ENCODE measurements at regions of chr13 and their contacts with region 1.

Region 1: GRCh38 chr13:95156208-95156607 is 145.0 kb downstream of the ABCC4 start:
- DNase-seq: no peak
- ATAC-seq: no peak
- H3K4me3 ChIP-seq: no peak overlapping the region
- H3K27ac ChIP-seq: no peak overlapping the region
- H3K4me1 ChIP-seq: peaks cover 0 to 19% (median 0%) of the 10 kb centered on the region in 9 donors
- H3K27me3 ChIP-seq: no peaks in the 10 kb centered on the region
- CTCF ChIP-seq: peak in 4 of 9 donors; percentile 8 to 43 (median 23)

Region 2: GRCh38 chr13:93966267-93966936 is 1189.8 kb before region 1 on chr13:
- intact Hi-C with region 1: loop called in 1 of 10 experiments (anchors 5 kb)
- DNase-seq: no peak
- ATAC-seq: no peak
- H3K4me3 ChIP-seq: no peak overlapping the region
- H3K27ac ChIP-seq: no peak overlapping the region
- H3K4me1 ChIP-seq: no peaks in the 10 kb centered on the region
- H3K27me3 ChIP-seq: no peaks in the 10 kb centered on the region
- CTCF ChIP-seq: no peak

Measured in heart right ventricle (tissue), 16 donors.